ENCODE measurements at regions of chr11 and their contacts with region 1.

Region 1: GRCh38 chr11:66126808-66127555 is 56.9 kb downstream of the PACS1 start:
- DNase-seq: peak; percentile 39 to 79 (median 62)
- ATAC-seq: peak; percentile 93
- H3K4me3 ChIP-seq: peak overlapping the region; percentile 16
- H3K4me3 Mint-ChIP-seq: peak overlapping the region; percentile 82
- H3K27ac ChIP-seq: peak overlapping the region; percentile 69 to 73
- H3K27ac Mint-ChIP-seq: peak overlapping the region; percentile 95
- H3K4me1 ChIP-seq: peaks cover 34% of the 10 kb centered on the region
- H3K4me1 Mint-ChIP-seq: peaks cover 82% of the 10 kb centered on the region
- H3K27me3 ChIP-seq: no peaks in the 10 kb centered on the region
- H3K27me3 Mint-ChIP-seq: no peaks in the 10 kb centered on the region
- CTCF ChIP-seq: no peak

Region 2: GRCh38 chr11:66112601-66113098 is 14.3 kb before region 1 on chr11:
- CTCF ChIA-PET with region 1: interaction called, 27 read pairs
- POLR2A ChIA-PET with region 1: interaction called, 30 read pairs
- intact Hi-C with region 1: loop called in 1 of 2 experiments (anchors 1 kb)
- DNase-seq: peak in 1 of 14 experiments; percentile 34
- ATAC-seq: no peak
- H3K4me3 ChIP-seq: no peak overlapping the region
- H3K4me3 Mint-ChIP-seq: peak overlapping the region; percentile 50
- H3K27ac ChIP-seq: peak overlapping the region; percentile 57 to 66
- H3K27ac Mint-ChIP-seq: peak overlapping the region; percentile 83
- H3K4me1 ChIP-seq: peaks cover 79% of the 10 kb centered on the region
- H3K4me1 Mint-ChIP-seq: peaks cover 95% of the 10 kb centered on the region
- H3K27me3 ChIP-seq: no peaks in the 10 kb centered on the region
- H3K27me3 Mint-ChIP-seq: no peaks in the 10 kb centered on the region
- CTCF ChIP-seq: no peak

Region 3: DNA sequence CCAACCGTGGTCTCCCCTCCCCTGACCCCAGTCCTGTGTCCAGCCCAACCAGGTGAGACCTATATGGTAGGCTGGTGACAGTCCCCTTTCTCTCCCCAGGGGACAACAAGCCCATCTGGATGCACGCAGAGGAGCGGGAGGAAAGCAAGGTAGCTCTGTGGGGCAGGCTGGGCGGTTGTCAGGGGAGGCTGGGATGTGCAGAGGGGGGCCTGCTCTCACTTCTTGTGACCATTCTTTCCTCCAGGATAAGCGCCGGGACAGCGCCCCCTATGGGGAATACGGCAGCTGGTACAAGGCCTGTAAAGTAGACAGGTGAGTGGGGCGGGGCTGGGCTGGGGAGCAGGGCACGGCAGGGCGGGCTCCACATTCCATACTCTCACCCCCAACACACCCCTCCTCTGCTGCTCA is 137.9 kb after region 1 on chr11:
- CTCF ChIA-PET with region 1: no interaction called
- POLR2A ChIA-PET with region 1: no interaction called
- intact Hi-C with region 1: no loop called
- DNase-seq: peak in 4 of 14 experiments; percentile 31 to 69 (median 52)
- ATAC-seq: no peak
- H3K4me3 ChIP-seq: no peak overlapping the region
- H3K4me3 Mint-ChIP-seq: peak overlapping the region; percentile 62
- H3K27ac ChIP-seq: no peak overlapping the region
- H3K27ac Mint-ChIP-seq: no peak overlapping the region
- H3K4me1 ChIP-seq: peaks cover 28% of the 10 kb centered on the region
- H3K4me1 Mint-ChIP-seq: peaks cover 30% of the 10 kb centered on the region
- H3K27me3 ChIP-seq: no peaks in the 10 kb centered on the region
- H3K27me3 Mint-ChIP-seq: no peaks in the 10 kb centered on the region
- CTCF ChIP-seq: no peak